ENCODE measurements at regions of chr12 and their contacts with region 1.

Region 1: DNA sequence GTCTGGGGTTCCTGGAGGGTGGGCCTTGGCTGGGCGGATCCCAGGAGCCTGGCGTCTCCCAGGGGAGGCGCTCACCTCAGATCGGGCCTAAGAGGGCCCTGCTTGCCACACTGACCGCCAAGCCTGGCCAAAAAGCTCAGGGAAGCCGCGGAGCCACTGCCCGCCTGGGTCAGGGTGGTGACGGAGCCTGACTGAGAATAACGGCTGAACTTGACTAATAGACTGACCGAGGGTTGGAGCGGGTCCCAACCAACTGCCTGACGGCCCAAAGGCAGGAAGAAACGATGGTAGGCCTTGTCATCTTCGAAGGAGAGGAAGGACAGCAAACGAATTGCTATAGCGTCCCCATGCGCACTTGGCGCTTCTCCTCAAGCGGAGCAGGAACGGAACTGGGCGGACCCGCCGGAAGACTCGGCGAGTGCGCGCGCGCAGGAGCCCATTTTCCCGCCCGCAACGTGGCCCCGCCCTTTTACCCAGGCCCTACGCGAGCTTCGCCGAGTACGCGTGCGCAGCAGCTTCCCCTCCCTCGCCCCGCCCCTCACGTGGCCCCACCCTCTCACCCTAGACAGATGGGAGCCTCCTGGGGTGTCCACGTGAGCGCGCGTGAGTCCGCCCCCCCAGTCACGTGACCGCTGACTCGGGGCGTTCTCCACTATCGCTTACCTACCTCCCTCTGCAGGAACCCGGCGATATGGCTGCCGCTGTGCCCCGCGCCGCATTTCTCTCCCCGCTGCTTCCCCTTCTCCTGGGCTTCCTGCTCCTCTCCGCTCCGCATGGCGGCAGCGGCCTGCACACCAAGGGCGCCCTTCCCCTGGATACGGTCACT is at the starts of genes ERP29 and TMEM116:
- DNase-seq: peak; percentile 100
- ATAC-seq: peak; percentile 80
- H3K4me3 Mint-ChIP-seq: peak within 1 kb of the TSS; percentile 98
- H3K27ac Mint-ChIP-seq: peak within 1 kb of the TSS; percentile 99
- H3K4me1 Mint-ChIP-seq: peaks cover 53% of the 10 kb centered on the region
- H3K27me3 Mint-ChIP-seq: no peaks in the 10 kb centered on the region
- total RNA-seq, gene ERP29: 79.7 to 87.3 TPM
- total RNA-seq, gene TMEM116: 11.2 to 12.5 TPM

Region 2: DNA sequence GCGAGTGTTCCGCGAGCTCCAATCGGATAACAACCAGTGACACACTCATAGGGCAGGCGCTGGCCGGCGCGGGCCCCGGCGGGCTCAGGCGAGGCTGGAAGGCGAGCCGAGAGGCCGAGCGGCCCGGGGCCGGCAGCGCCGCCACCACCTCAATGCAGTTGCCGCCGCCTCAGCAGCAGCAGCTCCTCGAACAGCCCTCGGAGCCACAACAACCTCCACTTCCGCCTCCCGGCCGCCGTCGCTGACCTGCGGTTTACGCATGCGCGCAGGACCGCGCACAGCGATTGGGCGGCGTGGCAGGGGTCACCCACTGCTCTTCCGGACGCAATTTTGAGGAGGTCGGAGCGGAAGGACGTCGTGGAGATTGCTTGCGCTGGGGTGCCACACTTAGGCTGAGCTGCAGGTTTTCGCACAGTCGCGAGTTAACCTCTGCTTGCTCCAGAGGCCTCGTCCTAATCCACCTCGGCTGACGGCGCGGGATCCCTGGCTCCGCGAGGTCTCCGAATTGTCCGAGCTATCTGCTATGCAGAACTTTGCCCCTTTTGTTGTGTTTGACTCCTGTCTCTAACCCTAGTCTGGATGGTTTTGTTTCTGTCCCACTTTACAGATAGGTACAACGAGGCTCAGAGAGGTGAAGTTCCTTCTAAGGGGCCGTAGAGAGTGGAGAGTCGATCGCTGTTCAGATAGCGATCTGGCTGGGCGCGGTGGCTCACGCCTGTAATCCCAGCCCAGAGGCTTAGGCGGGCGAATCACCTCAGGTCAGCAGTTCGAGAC is 327.1 kb before region 1 on chr12 and contains the starts of genes ACAD10 and BRAP:
- CTCF ChIA-PET with region 1: no interaction called
- POLR2A ChIA-PET with region 1: no interaction called
- intact Hi-C with region 1: loop called in 1 of 2 experiments (anchors 1 kb)
- DNase-seq: peak; percentile 95
- ATAC-seq: peak; percentile 97
- H3K4me3 Mint-ChIP-seq: peak within 1 kb of the TSS; percentile 89
- H3K27ac Mint-ChIP-seq: peak within 1 kb of the TSS; percentile 91
- H3K4me1 Mint-ChIP-seq: peaks cover 31% of the 10 kb centered on the region
- H3K27me3 Mint-ChIP-seq: no peaks in the 10 kb centered on the region
- total RNA-seq, gene ACAD10: 25.5 to 27.5 TPM
- total RNA-seq, gene BRAP: 18.3 to 23.6 TPM

Region 3: DNA sequence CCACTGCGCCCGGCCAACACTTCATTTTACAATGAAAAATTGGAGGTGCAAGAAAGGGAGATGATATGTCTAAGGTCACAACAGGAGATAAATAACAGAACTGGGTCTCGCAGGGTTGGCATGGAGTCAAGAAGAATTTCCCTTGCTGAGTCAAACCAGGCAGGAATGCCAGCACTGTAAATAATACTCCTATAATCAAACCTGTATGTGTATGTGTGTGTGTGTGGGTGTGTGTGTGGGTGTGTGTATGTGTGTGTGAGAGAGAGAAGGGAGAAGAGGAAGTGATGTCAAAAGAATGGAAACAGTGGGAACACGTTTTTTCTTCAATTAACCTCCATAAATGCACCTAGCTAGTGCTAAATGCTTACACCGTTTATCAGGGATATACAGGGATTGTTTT is 70.4 kb before region 1 on chr12:
- CTCF ChIA-PET with region 1: interaction called, 18 read pairs
- POLR2A ChIA-PET with region 1: no interaction called
- intact Hi-C with region 1: loop called (anchors 1 kb)
- DNase-seq: peak; percentile 7
- ATAC-seq: no peak
- H3K4me3 Mint-ChIP-seq: no peak overlapping the region
- H3K27ac Mint-ChIP-seq: peak overlapping the region; percentile 77
- H3K4me1 Mint-ChIP-seq: peaks cover 15% of the 10 kb centered on the region
- H3K27me3 Mint-ChIP-seq: no peaks in the 10 kb centered on the region

Region 4: GRCh38 chr12:112087055-112087850 is 74.3 kb after region 1 on chr12:
- CTCF ChIA-PET with region 1: interaction called, 3 read pairs
- POLR2A ChIA-PET with region 1: no interaction called
- intact Hi-C with region 1: loop called in 1 of 2 experiments (anchors 1 kb)
- DNase-seq: no peak
- ATAC-seq: no peak
- H3K4me3 Mint-ChIP-seq: no peak overlapping the region
- H3K27ac Mint-ChIP-seq: peak overlapping the region; percentile 67
- H3K4me1 Mint-ChIP-seq: peaks cover 25% of the 10 kb centered on the region
- H3K27me3 Mint-ChIP-seq: no peaks in the 10 kb centered on the region

Region 5: DNA sequence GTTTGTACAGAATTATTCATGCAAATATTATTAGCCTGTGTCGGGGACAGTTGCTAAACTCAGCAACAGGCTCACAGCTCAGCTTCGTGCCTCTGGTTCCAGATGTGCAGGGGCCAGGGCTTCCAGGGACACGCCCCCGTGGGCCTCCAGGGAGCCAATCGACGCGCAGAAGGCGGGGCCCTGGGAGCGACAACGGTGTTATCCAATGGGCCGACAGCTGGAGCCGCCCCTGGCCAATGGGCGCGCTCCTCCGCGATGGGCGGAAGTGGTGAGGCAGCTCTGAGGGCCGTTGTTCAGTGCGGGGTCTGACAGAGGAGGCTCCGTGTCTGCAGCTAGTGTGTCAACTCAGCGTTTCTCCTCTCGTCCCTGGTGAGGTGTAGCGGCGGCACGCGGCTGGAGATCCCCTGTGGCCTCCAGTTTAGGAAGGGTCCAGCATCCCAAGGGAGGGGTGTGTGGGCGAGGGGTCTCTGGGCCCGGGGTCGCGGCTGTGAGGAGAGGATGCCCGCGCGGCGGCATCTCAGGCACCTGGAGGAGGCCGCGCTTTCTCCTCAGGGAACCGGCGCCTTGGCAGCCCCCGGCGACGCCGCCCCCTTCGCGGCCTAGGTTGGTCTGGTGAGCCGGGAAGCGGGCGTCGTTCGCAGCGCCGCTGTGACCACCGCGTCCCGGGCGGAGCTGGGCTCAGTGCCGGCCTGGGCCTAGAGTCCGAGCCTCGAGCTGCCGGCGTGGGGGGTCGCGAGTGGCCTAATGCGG is 112.4 kb after region 1 on chr12 and contains the start of gene TRAFD1:
- CTCF ChIA-PET with region 1: interaction called, 4 read pairs
- POLR2A ChIA-PET with region 1: interaction called, 6 read pairs
- intact Hi-C with region 1: loop called (anchors 1 to 5 kb)
- DNase-seq: peak; percentile 99
- ATAC-seq: peak; percentile 99
- H3K4me3 Mint-ChIP-seq: peak within 1 kb of the TSS; percentile 83
- H3K27ac Mint-ChIP-seq: peak within 1 kb of the TSS; percentile 82
- H3K4me1 Mint-ChIP-seq: peaks cover 38% of the 10 kb centered on the region
- H3K27me3 Mint-ChIP-seq: no peaks in the 10 kb centered on the region
- total RNA-seq, gene TRAFD1: 52.5 to 54.1 TPM

Region 6: GRCh38 chr12:112409064-112409905 is 396.3 kb after region 1 on chr12 and contains the start of gene RPL6:
- CTCF ChIA-PET with region 1: interaction called, 5 read pairs
- POLR2A ChIA-PET with region 1: no interaction called
- intact Hi-C with region 1: loop called (anchors 1 to 2 kb)
- DNase-seq: peak; percentile 86
- ATAC-seq: peak; percentile 92
- H3K4me3 Mint-ChIP-seq: peak within 1 kb of the TSS; percentile 93
- H3K27ac Mint-ChIP-seq: peak within 1 kb of the TSS; percentile 100
- H3K4me1 Mint-ChIP-seq: peaks cover 42% of the 10 kb centered on the region
- H3K27me3 Mint-ChIP-seq: no peaks in the 10 kb centered on the region
- total RNA-seq, gene RPL6: 2,097 to 2,202 TPM